MCF 10A (cell line): ENCODE measurements at regions of chr19 and their contacts with region 1.

Region 1: GRCh38 chr19:18041054-18041453 is 33.1 kb downstream of the ARRDC2 start:
- DNase-seq: no peak
- H3K4me3 Mint-ChIP-seq: no peak overlapping the region
- H3K27ac Mint-ChIP-seq: no peak overlapping the region
- H3K4me1 Mint-ChIP-seq: peaks cover 3% of the 10 kb centered on the region
- H3K27me3 Mint-ChIP-seq: no peaks in the 10 kb centered on the region
- CTCF ChIP-seq: no peak

Region 2: GRCh38 chr19:18274781-18275356 is 233.8 kb after region 1 on chr19:
- CTCF ChIA-PET with region 1: interaction called, 10 read pairs
- POLR2A ChIA-PET with region 1: no interaction called
- intact Hi-C with region 1: no loop called
- DNase-seq: peak; percentile 94
- H3K4me3 Mint-ChIP-seq: peak overlapping the region; percentile 38
- H3K27ac Mint-ChIP-seq: peak overlapping the region; percentile 79
- H3K4me1 Mint-ChIP-seq: peaks cover 23% of the 10 kb centered on the region
- H3K27me3 Mint-ChIP-seq: no peaks in the 10 kb centered on the region
- CTCF ChIP-seq: peak; percentile 3